Ovary (tissue), 10 donors: ENCODE measurements at regions of chrX and their contacts with region 1.

Region 1: DNA sequence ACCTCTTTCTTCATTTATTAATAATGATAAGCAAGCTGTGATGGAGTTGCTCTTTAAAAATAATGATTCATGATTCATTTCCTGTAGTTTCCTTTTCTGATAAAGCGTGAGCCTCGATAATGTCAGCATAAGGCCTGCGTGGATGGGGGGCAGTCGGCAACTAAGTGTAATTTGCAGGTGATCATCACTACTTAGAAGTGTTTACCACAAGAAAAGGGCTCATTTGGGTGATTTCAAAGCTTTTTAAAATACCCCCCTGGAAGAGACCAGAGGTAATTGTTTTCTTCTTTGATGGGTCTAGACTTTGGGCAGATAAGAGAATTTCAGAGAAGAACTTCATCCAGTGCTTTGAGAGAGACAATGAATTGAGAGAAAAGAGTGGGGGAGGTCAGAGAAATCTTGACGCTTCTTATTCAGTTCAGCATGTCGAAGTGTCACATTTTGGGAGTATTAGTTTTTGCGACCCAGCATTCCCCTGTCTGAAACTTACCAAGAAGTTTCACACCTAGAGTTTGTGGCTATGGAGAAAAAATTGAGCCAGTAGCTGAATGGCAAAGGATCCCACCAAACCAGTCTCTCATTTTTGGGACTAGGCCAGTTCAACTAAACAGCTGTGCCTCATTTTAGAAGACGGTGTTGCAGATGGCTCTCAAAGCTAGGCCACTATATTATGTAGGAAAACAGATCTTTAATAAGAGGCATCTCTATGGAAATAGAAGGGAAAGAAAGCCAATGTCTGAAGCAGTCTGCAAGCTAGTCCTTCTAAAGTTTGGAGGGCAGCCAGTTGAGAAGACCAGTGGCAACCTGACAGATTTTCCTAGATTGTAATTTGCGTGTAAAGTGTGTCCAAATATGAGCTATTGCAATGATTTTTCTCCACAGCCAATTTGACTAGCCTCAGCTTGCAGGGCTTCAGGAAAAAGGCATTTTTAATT is 171.0 kb upstream of the PPP1R2C start:
- DNase-seq: no peak
- H3K4me3 ChIP-seq: no peak overlapping the region
- H3K27ac ChIP-seq: no peak overlapping the region
- H3K4me1 ChIP-seq: no peaks in the 10 kb centered on the region
- H3K27me3 ChIP-seq: no peaks in the 10 kb centered on the region
- CTCF ChIP-seq: no peak
- EP300 ChIP-seq: no peak
- POLR2A ChIP-seq: no peak

Region 2: GRCh38 chrX:42869659-42870476 is 79.1 kb before region 1 on chrX:
- intact Hi-C with region 1: loop called in 1 of 4 experiments (anchors 5 kb)
- DNase-seq: no peak
- H3K4me3 ChIP-seq: no peak overlapping the region
- H3K27ac ChIP-seq: no peak overlapping the region
- H3K4me1 ChIP-seq: no peaks in the 10 kb centered on the region
- H3K27me3 ChIP-seq: no peaks in the 10 kb centered on the region
- CTCF ChIP-seq: no peak
- EP300 ChIP-seq: no peak
- POLR2A ChIP-seq: no peak